HCT116 (cell line): ENCODE measurements at regions of chr6 and their contacts with region 1.

Region 1: DNA sequence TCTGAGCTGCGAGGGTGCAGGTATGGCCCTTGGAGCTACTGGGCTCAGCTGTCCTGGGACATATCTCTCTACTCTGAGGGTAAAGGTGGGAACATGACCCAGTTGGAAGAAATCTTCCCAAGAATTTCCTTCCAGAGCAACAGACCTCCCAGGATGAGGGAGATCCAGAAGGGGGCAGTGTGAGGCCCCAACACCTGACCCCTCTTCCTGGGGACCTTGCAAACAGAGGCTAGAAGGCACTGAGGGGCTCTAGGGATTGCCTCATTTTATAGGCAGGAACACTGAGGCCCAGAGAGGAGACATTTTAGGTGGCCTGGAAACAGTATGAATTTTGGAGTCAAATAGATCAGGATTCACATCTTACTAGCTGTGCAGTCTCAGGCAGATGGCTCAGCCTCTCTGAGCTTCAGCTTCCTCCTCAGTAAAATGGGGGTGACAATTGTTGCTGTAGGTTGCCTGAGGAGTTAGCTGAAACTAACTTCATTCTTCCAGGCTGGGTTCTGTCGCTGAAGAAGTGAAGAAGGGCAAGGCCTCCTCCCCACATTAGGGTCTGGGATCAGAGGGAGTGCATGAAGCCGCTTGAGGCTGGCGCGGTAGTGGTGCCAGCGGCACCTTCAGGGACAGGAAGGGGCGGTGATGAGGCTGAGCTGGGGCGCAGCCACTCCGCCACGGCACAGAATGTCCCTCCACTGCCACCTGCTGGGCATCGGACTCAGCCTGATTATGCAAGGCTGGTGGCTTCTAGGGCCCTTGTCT is 11.4 kb downstream of the KCNK17 start:
- DNase-seq: peak; percentile 74
- ATAC-seq: peak; percentile 91
- H3K4me3 ChIP-seq: peak overlapping the region in 1 of 2 experiments; percentile 19; a peak in 2 of 4 replicates
- H3K27ac ChIP-seq: no peak overlapping the region
- H3K4me1 ChIP-seq: peaks cover 0 to 12% of the 10 kb centered on the region in 2 experiments; a peak in 2 of 4 replicates
- H3K27me3 ChIP-seq: 0 out of 2 replicates have a peak, but pooled peaks cover 4% of the 10 kb centered on the region
- CTCF ChIP-seq: peak; percentile 89 to 97 (median 90)
- POLR2A ChIP-seq: no peak
- RAD21 ChIP-seq: peak; percentile 98

Region 2: GRCh38 chr6:37940074-37940847 is 1362.6 kb before region 1 on chr6:
- CTCF ChIA-PET with region 1: no interaction called
- POLR2A ChIA-PET with region 1: no interaction called
- RAD21 ChIA-PET with region 1: no interaction called
- intact Hi-C with region 1: no loop called
- DNase-seq: no peak
- ATAC-seq: no peak
- H3K4me3 ChIP-seq: no peak overlapping the region
- H3K27ac ChIP-seq: no peak overlapping the region
- H3K4me1 ChIP-seq: no peaks in the 10 kb centered on the region
- H3K27me3 ChIP-seq: no peaks in the 10 kb centered on the region
- CTCF ChIP-seq: no peak
- POLR2A ChIP-seq: no peak
- RAD21 ChIP-seq: no peak

Region 3: DNA sequence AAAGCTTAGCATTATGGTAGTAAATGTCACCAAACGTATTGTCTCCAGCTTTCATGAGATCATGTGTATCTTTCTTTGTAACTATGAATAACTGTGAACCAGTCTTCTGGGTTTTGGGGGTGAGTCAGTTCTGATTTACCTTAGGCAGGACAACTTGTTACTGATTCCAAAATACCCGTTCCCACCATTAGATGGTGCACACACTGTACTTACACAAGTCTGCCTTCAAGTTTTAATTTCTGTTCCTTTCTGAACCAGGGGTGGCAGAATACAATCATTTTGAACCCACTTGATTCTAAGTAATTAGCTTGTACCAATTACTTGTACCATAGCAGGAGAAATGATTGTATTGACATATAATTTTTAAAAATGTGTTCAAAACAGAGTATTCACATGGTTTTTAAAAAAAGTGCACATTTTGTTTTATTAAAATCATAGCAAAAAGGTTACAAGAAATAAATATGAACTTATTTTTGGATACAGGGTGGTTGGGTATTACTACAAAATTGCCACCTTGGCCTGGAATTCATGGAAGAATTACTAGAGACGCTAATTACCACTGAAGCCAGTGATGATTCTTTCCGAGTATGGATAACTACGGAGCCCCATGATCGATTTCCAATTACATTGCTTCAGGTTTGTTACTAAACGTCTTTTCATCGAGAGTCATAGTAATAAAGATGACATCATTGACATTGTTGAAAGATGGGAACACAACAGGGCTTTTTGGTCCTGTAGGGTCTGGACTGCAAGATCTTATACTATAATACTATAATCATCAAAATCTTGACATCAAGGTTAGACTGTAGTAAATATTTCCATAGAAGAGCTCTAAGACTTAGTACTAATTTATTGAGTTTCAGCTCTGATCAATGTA is 329.4 kb before region 1 on chr6:
- CTCF ChIA-PET with region 1: interaction called, 11 read pairs
- POLR2A ChIA-PET with region 1: no interaction called
- RAD21 ChIA-PET with region 1: no interaction called
- intact Hi-C with region 1: no loop called
- DNase-seq: peak; percentile 72
- ATAC-seq: peak; percentile 96
- H3K4me3 ChIP-seq: no peak overlapping the region
- H3K27ac ChIP-seq: no peak overlapping the region
- H3K4me1 ChIP-seq: no peaks in the 10 kb centered on the region
- H3K27me3 ChIP-seq: peaks cover 70% of the 10 kb centered on the region
- CTCF ChIP-seq: peak; percentile 65 to 83 (median 77)
- POLR2A ChIP-seq: no peak
- RAD21 ChIP-seq: peak; percentile 67

Region 4: DNA sequence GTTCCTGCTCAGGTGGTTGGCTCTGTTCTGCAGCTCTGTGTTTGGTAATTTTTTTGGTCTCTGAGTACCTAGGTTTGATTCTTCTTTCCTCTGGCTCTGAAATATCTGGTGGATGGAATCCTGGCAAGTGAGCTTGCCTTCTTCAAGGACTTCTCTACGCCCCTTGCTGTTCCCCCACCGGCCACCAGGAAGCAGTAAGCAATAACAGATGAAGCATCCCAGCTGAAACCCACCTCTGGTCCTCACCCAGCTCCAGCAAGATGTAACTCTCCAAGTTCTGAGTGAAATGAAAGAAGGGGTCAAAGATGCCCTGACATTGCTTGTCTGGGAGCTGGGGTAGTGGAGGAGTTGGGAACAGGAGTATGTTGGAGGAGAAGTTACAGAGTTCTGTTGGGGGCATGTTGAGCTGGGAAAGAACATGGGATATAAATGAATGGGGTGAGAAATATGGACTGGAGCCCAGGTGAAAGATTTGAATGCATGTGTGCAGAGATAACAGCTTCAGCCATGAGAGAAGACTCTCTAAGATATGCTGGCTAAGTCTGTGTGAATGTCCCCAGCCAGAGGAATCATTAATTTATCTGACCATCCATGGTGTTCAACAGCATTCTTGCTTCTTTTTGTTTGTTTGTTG is 305.6 kb before region 1 on chr6:
- CTCF ChIA-PET with region 1: interaction called, 17 read pairs
- POLR2A ChIA-PET with region 1: no interaction called
- RAD21 ChIA-PET with region 1: no interaction called
- intact Hi-C with region 1: no loop called
- DNase-seq: no peak
- ATAC-seq: peak; percentile 70
- H3K4me3 ChIP-seq: no peak overlapping the region
- H3K27ac ChIP-seq: no peak overlapping the region
- H3K4me1 ChIP-seq: no peaks in the 10 kb centered on the region
- H3K27me3 ChIP-seq: peaks cover 91% of the 10 kb centered on the region
- CTCF ChIP-seq: peak; percentile 35 to 73 (median 71); a peak in 5 of 6 replicates
- POLR2A ChIP-seq: no peak
- RAD21 ChIP-seq: peak; percentile 55

Region 5: DNA sequence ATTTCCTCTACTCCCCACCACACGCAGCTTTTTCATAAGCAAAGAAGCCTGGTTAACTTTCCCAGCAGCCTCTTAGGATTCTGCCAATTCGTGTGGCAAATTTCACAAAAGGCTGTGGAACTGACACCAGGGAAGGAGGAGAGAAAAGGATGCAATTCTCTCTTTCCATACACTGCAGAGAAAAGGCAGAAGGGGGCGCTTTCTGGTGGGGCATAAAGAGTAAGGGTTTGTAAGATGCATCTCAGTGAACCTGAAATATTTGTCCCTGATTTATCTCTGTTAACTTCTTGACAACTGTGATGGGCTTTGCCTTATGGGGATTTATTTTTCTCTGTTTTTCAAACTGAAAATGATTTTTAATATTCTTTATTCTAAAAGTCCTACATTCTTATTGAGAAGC is 299.8 kb before region 1 on chr6:
- CTCF ChIA-PET with region 1: interaction called, 17 read pairs
- POLR2A ChIA-PET with region 1: no interaction called
- RAD21 ChIA-PET with region 1: no interaction called
- intact Hi-C with region 1: no loop called
- DNase-seq: no peak
- ATAC-seq: peak; percentile 73
- H3K4me3 ChIP-seq: no peak overlapping the region
- H3K27ac ChIP-seq: no peak overlapping the region
- H3K4me1 ChIP-seq: no peaks in the 10 kb centered on the region
- H3K27me3 ChIP-seq: peaks cover 81% of the 10 kb centered on the region
- CTCF ChIP-seq: peak; percentile 33 to 46 (median 45); a peak in 4 of 6 replicates
- POLR2A ChIP-seq: no peak
- RAD21 ChIP-seq: peak; percentile 45

Region 6: GRCh38 chr6:39166189-39166911 is 136.5 kb before region 1 on chr6:
- CTCF ChIA-PET with region 1: interaction called, 123 read pairs
- POLR2A ChIA-PET with region 1: interaction called, 4 read pairs
- RAD21 ChIA-PET with region 1: interaction called, 8 to 12 read pairs
- intact Hi-C with region 1: loop called (anchors 1 kb)
- DNase-seq: peak; percentile 52
- ATAC-seq: peak; percentile 99
- H3K4me3 ChIP-seq: no peak overlapping the region
- H3K27ac ChIP-seq: no peak overlapping the region
- H3K4me1 ChIP-seq: no peaks in the 10 kb centered on the region
- H3K27me3 ChIP-seq: no peaks in the 10 kb centered on the region
- CTCF ChIP-seq: peak; percentile 79 to 95 (median 89)
- POLR2A ChIP-seq: no peak
- RAD21 ChIP-seq: peak; percentile 96

Region 7: DNA sequence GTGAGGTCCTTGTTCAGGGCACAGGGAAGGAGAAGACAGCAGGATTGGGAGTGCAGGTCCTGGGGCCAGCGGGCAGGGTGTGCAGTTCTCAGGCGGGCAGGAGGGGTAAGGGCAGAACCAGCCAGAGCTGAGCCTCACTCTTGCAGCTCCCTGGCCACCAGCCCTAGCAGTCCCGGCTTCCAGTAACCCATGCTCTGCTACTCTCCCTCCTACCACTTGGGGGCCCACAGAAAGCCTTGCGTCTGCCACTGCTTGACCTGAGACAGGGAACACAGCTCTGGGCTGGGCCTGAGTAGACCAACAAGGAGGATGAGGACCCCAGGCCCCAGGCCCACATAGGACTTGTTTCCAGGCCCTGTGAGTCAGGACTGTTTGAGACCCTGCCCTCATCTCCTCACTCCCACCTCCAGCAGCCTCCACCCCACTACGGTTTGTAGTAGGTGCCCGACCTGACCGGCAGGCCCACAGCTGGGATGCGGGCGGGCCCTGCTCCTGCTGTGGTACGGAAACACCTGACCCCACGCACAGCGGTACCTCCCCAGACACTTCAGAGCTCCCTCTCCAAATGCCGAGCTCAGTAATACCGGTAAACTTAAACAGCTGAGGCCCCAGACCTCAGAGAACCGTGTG is 112.8 kb before region 1 on chr6:
- CTCF ChIA-PET with region 1: interaction called, 13 read pairs
- POLR2A ChIA-PET with region 1: no interaction called
- RAD21 ChIA-PET with region 1: no interaction called
- intact Hi-C with region 1: loop called (anchors 1 kb)
- DNase-seq: no peak
- ATAC-seq: peak; percentile 88
- H3K4me3 ChIP-seq: no peak overlapping the region
- H3K27ac ChIP-seq: no peak overlapping the region
- H3K4me1 ChIP-seq: peaks cover 3 to 17% of the 10 kb centered on the region in 2 experiments
- H3K27me3 ChIP-seq: no peaks in the 10 kb centered on the region
- CTCF ChIP-seq: peak; percentile 31 to 69 (median 57); a peak in 5 of 6 replicates
- POLR2A ChIP-seq: no peak
- RAD21 ChIP-seq: peak; percentile 56

Region 8: GRCh38 chr6:39228992-39229767 is 73.7 kb before region 1 on chr6 and contains the start of gene KCNK5:
- CTCF ChIA-PET with region 1: interaction called, 14 read pairs
- POLR2A ChIA-PET with region 1: interaction called, 6 read pairs
- RAD21 ChIA-PET with region 1: no interaction called
- intact Hi-C with region 1: loop called (anchors 1 kb)
- DNase-seq: peak; percentile 73
- ATAC-seq: peak; percentile 99
- H3K4me3 ChIP-seq: peak within 1 kb of the TSS; percentile 75 to 88
- H3K27ac ChIP-seq: peak within 1 kb of the TSS; percentile 53; the same call in 1 of the 2 replicates
- H3K4me1 ChIP-seq: peaks cover 9 to 41% of the 10 kb centered on the region in 2 experiments; a peak in 3 of 4 replicates
- H3K27me3 ChIP-seq: no peaks in the 10 kb centered on the region
- CTCF ChIP-seq: peak; percentile 80 to 89 (median 88)
- POLR2A ChIP-seq: peak; percentile 79
- RAD21 ChIP-seq: peak; percentile 76
- total RNA-seq, gene KCNK5: 9.5 TPM